Endothelial cell of umbilical vein (primary cell): ENCODE measurements at regions of chr1 and their contacts with region 1.

Region 1: DNA sequence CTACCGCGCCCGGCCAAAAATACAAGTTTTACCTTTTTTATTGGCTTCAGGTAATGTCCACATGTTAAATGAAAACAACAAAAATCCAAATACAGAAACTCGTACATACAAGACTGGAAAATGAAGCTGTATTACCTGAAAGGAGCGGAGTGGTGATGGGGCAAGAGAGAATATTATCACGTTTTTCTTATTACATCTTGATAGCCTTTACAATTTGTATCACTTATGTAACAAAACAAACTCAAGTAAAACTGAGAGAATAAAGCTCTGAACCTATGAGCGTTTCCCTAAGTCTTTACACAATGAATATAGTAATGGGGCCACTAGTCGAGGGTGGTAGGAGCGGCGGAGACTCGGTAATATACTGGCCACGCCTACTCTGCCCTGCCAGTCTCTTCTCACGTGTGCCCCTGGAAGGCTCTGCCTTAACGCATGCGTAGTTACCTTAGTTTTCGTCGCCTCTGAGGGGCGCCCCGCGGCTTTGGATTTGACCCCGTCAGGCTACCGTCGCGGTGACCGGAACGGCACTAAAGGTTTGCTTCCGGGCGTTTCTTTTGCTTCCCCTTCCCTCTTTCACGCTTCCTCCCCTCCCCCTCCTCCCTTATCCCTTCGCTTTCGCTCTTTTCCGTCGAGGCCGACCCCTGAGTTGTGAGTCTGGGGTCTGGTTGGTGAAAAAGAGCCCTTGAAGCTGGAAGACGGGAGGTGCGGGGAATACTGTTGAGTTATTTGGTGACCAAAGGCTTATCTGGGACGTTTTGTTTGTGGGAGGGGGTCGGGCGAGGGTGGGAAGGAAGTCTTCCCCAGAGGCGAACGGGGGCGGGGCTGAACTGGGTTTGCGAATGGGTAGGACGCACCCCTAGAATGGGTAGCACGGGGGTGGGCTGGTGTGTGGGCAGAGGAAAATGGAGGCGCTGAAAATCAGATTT is at the start of gene SETDB1:
- DNase-seq: peak; percentile 97
- H3K4me3 ChIP-seq: peak within 1 kb of the TSS; percentile 78 to 97 (median 91)
- H3K27ac ChIP-seq: peak within 1 kb of the TSS; percentile 84
- H3K4me1 ChIP-seq: peaks cover 6% of the 10 kb centered on the region
- H3K27me3 ChIP-seq: no peaks in the 10 kb centered on the region
- CTCF ChIP-seq: no peak
- POLR2A ChIP-seq: peak; percentile 72
- total RNA-seq, gene SETDB1: 42.0 and 49.2 TPM in 2 replicates

Region 2: DNA sequence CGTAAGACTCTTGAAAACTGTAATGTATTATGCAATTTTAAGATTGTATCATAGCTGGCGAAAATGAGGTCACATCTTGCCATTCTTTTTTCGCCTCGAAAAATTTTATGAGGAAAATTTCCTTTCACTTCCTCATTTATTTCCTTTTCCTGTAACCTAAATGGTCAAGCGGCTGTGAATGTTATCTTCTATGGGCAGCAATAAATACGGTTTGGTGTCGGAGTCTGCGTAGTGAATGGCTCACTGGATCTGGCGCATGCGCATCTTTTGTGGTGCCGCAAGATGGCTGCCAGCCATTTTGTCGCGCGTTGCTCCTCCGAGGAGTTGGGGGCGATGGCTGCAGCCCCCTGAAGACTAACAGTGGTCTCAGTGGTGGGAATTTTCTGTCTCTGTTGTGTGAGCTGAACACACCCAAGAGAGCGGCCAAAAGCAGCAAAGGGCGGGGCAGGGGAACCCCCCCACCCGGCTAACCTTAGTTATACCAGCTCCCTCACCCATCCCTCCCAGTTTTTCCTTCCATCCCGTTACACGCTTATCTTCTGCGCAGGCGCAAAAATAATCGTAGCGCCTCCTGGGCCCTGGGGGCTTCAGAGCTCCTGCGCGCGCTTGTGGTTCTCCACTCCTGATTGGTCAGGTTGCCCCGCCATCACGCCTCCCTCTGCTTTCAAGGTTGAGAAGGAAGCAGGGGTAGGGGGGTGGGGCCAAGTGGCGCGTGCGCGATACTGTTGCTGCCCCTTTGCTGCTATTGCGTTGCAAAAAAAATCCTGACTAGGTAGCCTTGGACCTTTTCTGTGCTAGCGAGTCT is 562.5 kb before region 1 on chr1 and contains the start of gene RPRD2:
- CTCF ChIA-PET with region 1: no interaction called
- POLR2A ChIA-PET with region 1: no interaction called
- dilution Hi-C with region 1: no loop called
- intact Hi-C with region 1: loop called (anchors 1 kb)
- DNase-seq: peak; percentile 99
- H3K4me3 ChIP-seq: peak within 1 kb of the TSS; percentile 58 to 95 (median 84)
- H3K27ac ChIP-seq: peak within 1 kb of the TSS; percentile 75
- H3K4me1 ChIP-seq: peaks cover 18% of the 10 kb centered on the region
- H3K27me3 ChIP-seq: no peaks in the 10 kb centered on the region
- CTCF ChIP-seq: no peak
- POLR2A ChIP-seq: peak; percentile 97
- total RNA-seq, gene RPRD2: 23.9 and 24.5 TPM in 2 replicates

Region 3: DNA sequence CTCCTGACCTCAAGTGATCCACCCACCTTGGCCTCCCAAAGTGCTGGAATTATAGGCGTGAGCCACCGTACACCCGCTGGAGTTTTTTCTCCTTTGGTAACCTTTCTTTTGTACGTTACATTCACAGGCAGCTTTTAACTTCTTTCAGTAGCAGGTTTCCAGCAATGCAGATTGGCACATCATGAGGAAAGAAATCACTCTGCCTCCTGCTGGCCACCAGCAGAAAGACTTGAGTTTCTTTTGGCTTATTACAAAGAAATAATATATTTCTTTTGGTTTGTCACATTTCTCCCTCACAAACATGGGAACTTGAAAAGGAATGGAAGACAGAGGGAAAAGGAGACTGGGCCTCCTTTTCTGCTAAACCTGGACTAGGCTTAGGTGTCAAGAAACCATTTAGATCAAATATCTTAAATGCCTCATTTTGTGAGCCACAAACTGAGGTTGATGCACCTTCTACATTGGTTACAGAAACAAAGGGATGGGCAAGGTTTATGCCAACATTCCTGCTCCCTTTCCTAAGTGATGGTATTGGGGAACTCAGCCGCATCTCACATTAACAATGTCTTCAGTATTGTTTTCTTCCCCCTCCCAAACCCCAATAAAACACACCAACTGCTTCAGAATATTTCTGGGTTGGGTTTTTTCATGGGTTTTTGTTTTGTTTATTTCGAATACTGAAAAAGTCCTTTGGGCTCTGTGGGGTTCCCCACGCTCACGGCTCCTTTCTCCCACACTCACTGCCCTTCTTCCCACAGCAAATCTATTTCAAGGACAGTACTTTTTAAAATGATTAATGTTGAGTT is 304.4 kb before region 1 on chr1:
- CTCF ChIA-PET with region 1: interaction called, 3 read pairs
- POLR2A ChIA-PET with region 1: interaction called, 4 read pairs
- dilution Hi-C with region 1: no loop called
- intact Hi-C with region 1: loop called (anchors 5 kb)
- DNase-seq: peak; percentile 73
- H3K4me3 ChIP-seq: no peak overlapping the region
- H3K27ac ChIP-seq: peak overlapping the region; percentile 27
- H3K4me1 ChIP-seq: peaks cover 30% of the 10 kb centered on the region
- H3K27me3 ChIP-seq: no peaks in the 10 kb centered on the region
- CTCF ChIP-seq: peak; percentile 65 to 66
- POLR2A ChIP-seq: no peak

Region 4: GRCh38 chr1:150836129-150836773 is 89.8 kb before region 1 on chr1:
- CTCF ChIA-PET with region 1: interaction called, 5 read pairs
- POLR2A ChIA-PET with region 1: no interaction called
- dilution Hi-C with region 1: no loop called
- intact Hi-C with region 1: loop called (anchors 5 kb)
- DNase-seq: peak; percentile 91
- H3K4me3 ChIP-seq: no peak overlapping the region
- H3K27ac ChIP-seq: no peak overlapping the region
- H3K4me1 ChIP-seq: peaks cover 2% of the 10 kb centered on the region
- H3K27me3 ChIP-seq: no peaks in the 10 kb centered on the region
- CTCF ChIP-seq: no peak
- POLR2A ChIP-seq: no peak

Region 5: GRCh38 chr1:150863724-150864123 is 62.4 kb before region 1 on chr1:
- CTCF ChIA-PET with region 1: interaction called, 19 read pairs
- POLR2A ChIA-PET with region 1: no interaction called
- dilution Hi-C with region 1: no loop called
- intact Hi-C with region 1: no loop called
- DNase-seq: no peak
- H3K4me3 ChIP-seq: no peak overlapping the region
- H3K27ac ChIP-seq: no peak overlapping the region
- H3K4me1 ChIP-seq: no peaks in the 10 kb centered on the region
- H3K27me3 ChIP-seq: no peaks in the 10 kb centered on the region
- CTCF ChIP-seq: no peak
- POLR2A ChIP-seq: no peak

Region 6: GRCh38 chr1:150876119-150876454 is 50.0 kb before region 1 on chr1:
- CTCF ChIA-PET with region 1: interaction called, 6 read pairs
- POLR2A ChIA-PET with region 1: interaction called, 6 read pairs
- dilution Hi-C with region 1: no loop called
- intact Hi-C with region 1: loop called (anchors 1 kb)
- DNase-seq: peak; percentile 73
- H3K4me3 ChIP-seq: peak overlapping the region; percentile 81 to 92 (median 91)
- H3K27ac ChIP-seq: peak overlapping the region; percentile 74
- H3K4me1 ChIP-seq: peaks cover 13% of the 10 kb centered on the region
- H3K27me3 ChIP-seq: no peaks in the 10 kb centered on the region
- CTCF ChIP-seq: no peak
- POLR2A ChIP-seq: no peak

Region 7: DNA sequence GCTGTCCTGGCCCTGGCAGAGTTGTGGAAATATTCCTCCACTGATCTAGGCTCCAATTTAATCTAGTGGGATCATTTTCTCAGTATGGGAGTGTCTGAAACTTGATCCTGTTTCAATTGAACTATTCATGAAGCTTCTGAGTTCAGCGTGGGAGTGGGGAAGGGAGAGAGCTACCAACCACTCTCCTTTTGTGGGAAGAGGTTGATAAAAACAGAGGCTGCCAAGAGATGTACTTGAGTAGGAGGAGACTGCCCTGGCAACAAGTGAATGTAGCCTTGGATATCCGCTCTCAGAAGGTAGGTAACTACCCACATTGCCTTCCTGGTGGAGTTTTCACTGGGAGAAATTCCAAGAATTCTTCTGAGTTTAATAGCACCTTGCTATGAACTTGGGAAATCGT is 39.1 kb before region 1 on chr1 and contains the start of gene CTXND2:
- CTCF ChIA-PET with region 1: interaction called, 11 read pairs
- POLR2A ChIA-PET with region 1: no interaction called
- dilution Hi-C with region 1: no loop called
- intact Hi-C with region 1: no loop called
- DNase-seq: no peak
- H3K4me3 ChIP-seq: no peak within 1 kb of the TSS
- H3K27ac ChIP-seq: no peak within 1 kb of the TSS
- H3K4me1 ChIP-seq: no peaks in the 10 kb centered on the region
- H3K27me3 ChIP-seq: peaks cover 4 to 11% of the 10 kb centered on the region in 2 experiments
- CTCF ChIP-seq: no peak
- POLR2A ChIP-seq: no peak
- total RNA-seq, gene CTXND2: not detected in 2 replicates

Region 8: DNA sequence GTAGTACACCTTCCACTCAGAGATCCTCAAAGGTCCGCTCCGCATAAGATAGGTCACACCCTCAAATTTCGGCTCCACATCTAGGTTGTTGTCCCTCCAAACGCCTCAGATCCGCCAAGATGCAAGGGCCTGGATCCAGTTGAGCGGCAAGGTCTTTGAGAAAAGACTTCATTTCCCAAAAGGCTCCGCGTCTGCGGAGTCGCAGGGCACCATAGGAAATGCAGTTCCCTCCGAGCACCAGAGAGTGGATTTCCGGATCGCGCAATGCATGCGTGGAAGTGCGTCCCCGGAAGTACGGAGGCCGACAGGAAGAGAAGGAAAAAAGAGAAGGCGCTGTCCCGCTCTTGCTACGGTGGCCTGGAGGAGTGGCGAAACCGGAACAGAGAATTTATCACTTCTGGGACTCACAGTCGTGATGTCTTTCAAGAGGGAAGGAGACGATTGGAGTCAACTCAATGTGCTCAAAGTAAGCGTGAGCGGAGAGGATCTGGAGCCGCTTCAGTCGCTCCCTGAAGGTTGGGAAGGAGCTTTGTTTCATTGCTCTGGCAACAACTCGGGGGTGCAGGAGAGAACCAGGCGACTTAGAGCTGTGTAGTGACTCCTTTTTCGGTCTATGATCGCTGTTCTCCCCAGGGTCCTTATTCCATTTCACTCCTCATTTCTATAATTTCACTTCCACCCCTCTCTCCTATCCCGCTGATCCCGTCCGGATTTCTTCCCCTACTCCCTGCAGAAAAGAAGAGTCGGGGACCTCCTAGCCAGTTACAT is 239.8 kb after region 1 on chr1 and contains the starts of genes LYSMD1 and SCNM1:
- CTCF ChIA-PET with region 1: no interaction called
- POLR2A ChIA-PET with region 1: no interaction called
- dilution Hi-C with region 1: no loop called
- intact Hi-C with region 1: no loop called
- DNase-seq: peak; percentile 98
- H3K4me3 ChIP-seq: peak within 1 kb of the TSS; percentile 65 to 89 (median 81)
- H3K27ac ChIP-seq: peak within 1 kb of the TSS; percentile 65
- H3K4me1 ChIP-seq: peaks cover 19% of the 10 kb centered on the region
- H3K27me3 ChIP-seq: no peaks in the 10 kb centered on the region
- CTCF ChIP-seq: no peak
- POLR2A ChIP-seq: peak; percentile 69
- total RNA-seq, gene LYSMD1: 6.4 and 8.2 TPM in 2 replicates
- total RNA-seq, gene SCNM1: 43.1 and 49.0 TPM in 2 replicates